ENCODE measurements at regions of chr22 and their contacts with region 1.

Region 1: GRCh38 chr22:30754971-30755756 is 60.5 kb downstream of the OSBP2 start:
- DNase-seq: peak; percentile 83
- CTCF ChIP-seq: peak; percentile 63

Region 2: DNA sequence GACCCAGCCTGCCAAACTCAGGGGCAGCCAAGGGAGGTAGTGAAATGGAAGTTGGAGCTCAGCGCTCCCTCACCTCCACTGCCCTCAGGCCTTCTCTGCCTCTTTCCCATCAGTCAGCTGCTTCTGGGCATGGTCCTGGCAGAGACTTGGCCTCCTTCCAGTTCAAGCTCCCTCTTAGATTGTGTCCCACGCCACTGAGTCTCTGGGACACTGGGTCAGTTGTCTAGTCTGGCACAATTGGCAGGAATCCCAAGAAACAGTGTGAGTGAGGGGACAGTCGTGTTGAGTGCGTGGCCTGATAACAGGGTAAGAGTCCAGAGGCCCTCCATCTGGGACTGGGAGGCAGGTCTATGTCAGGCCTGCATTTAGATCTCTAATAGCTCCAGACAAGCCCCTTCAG is 126.7 kb before region 1 on chr22:
- in situ Hi-C with region 1: loop called (anchors 5 kb)
- DNase-seq: no peak
- CTCF ChIP-seq: no peak

Region 3: GRCh38 chr22:30902496-30903357 is 147.6 kb after region 1 on chr22:
- in situ Hi-C with region 1: loop called (anchors 10 kb)
- DNase-seq: peak; percentile 58
- CTCF ChIP-seq: no peak

Measured in GM13976 (cell line).